ENCODE measurements at regions of chr11 and their contacts with region 1.

Region 1: DNA sequence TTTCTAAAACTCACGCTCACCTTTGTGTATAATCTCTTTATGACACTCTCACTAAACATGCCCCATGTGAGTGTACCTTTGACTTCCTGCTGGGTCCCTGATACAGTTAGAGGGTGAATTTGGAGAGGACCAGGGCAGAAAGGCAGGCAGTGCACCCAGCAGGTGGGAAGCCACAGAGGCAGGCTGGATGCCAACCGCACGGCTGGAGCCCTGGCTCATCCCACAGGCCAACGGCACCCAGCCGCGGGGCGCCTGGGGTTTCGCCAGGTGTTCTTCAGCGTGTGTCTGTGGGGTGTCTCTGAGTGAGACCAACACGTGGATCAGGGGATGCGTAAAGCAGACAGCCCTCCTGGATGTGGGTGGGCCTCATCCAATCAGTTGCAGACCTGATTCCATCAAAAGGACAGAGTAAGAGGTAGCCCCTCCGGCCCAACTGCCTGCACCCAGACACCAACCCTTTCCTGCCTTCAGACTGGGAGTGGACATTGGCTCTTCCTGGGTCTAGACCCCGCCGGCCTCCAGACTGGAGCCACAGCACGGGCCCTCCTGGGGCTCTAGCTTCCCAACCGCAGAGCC is 51.6 kb downstream of the DHCR7 start:
- DNase-seq: no peak
- H3K4me3 ChIP-seq: no peak overlapping the region
- H3K27ac ChIP-seq: no peak overlapping the region
- H3K4me1 ChIP-seq: peaks cover under 1% of the 10 kb centered on the region
- CTCF ChIP-seq: no peak

Region 2: GRCh38 chr11:71383461-71383860 is 13.2 kb before region 1 on chr11:
- CTCF ChIA-PET with region 1: interaction called, 4 read pairs
- POLR2A ChIA-PET with region 1: interaction called, 11 read pairs
- intact Hi-C with region 1: no loop called
- DNase-seq: peak; percentile 94
- H3K4me3 ChIP-seq: peak overlapping the region; percentile 40
- H3K27ac ChIP-seq: peak overlapping the region; percentile 92
- H3K4me1 ChIP-seq: peaks cover 60% of the 10 kb centered on the region
- CTCF ChIP-seq: no peak

Measured in OCI-LY7 (cell line).